B cell (primary cell): ENCODE measurements at regions of chr20 and their contacts with region 1.

Region 1: DNA sequence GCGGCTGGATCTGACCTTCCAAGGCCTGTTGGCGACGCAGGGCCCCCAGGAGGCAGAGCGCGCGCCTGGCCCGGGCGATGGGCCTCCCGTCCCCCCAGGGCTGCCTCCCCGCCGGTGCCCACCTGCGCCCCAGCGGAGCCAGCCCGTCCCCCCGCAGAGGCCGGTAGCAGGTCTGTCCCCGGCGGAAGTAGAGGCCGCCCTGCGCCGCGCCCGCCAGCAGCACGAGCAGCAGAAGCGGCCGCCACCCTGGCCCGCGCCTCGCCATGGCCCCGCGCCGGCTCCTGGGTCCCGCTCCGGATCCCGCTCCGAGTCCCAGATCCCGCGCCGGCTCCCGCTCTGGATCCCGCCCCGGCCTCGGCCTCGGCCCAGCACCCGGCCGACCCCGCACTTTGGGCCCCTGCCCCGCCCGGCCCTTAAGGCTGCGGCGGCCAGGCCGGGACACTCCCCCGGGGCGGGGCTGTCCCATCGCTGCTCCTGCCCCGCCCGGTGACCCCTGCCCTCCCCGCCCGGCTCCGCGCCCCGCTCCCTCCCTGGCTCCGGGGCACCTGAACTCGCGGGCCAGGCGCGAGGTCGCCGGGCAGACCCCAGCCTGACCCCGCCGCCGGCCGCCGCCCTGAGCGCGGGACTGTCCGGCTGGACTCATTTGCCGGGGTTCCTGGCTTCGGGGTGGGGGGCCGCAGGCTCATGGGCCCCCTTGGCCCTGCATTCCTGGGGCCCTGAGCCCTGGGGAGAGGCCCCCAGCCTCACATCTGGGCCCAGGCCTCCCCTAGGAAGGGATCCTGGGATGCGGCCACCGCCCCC is at the start of gene CTSZ:
- DNase-seq: peak; percentile 60
- ATAC-seq: peak; percentile 23
- H3K4me3 ChIP-seq: peak within 1 kb of the TSS; percentile 79 to 91 (median 88)
- H3K4me3 Mint-ChIP-seq: peak within 1 kb of the TSS; percentile 98
- H3K27ac ChIP-seq: peak within 1 kb of the TSS; percentile 97
- H3K27ac Mint-ChIP-seq: peak within 1 kb of the TSS; percentile 99
- H3K4me1 ChIP-seq: peaks cover 45 to 65% of the 10 kb centered on the region in 2 donors
- H3K4me1 Mint-ChIP-seq: peaks cover 71% of the 10 kb centered on the region
- H3K27me3 ChIP-seq: no peaks in the 10 kb centered on the region
- H3K27me3 Mint-ChIP-seq: no peaks in the 10 kb centered on the region
- CTCF ChIP-seq: no peak
- total RNA-seq, gene CTSZ: 319 and 322 TPM in 2 replicates

Region 2: GRCh38 chr20:57391074-57391554 is 1616.0 kb before region 1 on chr20 and contains the start of gene RBM38:
- CTCF ChIA-PET with region 1: no interaction called
- POLR2A ChIA-PET with region 1: no interaction called
- intact Hi-C with region 1: loop called (anchors 10 kb)
- DNase-seq: peak; percentile 91
- ATAC-seq: peak; percentile 66
- H3K4me3 ChIP-seq: peak within 1 kb of the TSS; percentile 82 to 99 (median 91)
- H3K4me3 Mint-ChIP-seq: peak within 1 kb of the TSS; percentile 98
- H3K27ac ChIP-seq: peak within 1 kb of the TSS; percentile 96 to 98
- H3K27ac Mint-ChIP-seq: peak within 1 kb of the TSS; percentile 98
- H3K4me1 ChIP-seq: peaks cover 54 to 66% of the 10 kb centered on the region in 2 donors
- H3K4me1 Mint-ChIP-seq: peaks cover 51% of the 10 kb centered on the region
- H3K27me3 ChIP-seq: no peaks in the 10 kb centered on the region
- H3K27me3 Mint-ChIP-seq: no peaks in the 10 kb centered on the region
- CTCF ChIP-seq: no peak
- total RNA-seq, gene RBM38: 224 and 225 TPM in 2 replicates

Region 3: DNA sequence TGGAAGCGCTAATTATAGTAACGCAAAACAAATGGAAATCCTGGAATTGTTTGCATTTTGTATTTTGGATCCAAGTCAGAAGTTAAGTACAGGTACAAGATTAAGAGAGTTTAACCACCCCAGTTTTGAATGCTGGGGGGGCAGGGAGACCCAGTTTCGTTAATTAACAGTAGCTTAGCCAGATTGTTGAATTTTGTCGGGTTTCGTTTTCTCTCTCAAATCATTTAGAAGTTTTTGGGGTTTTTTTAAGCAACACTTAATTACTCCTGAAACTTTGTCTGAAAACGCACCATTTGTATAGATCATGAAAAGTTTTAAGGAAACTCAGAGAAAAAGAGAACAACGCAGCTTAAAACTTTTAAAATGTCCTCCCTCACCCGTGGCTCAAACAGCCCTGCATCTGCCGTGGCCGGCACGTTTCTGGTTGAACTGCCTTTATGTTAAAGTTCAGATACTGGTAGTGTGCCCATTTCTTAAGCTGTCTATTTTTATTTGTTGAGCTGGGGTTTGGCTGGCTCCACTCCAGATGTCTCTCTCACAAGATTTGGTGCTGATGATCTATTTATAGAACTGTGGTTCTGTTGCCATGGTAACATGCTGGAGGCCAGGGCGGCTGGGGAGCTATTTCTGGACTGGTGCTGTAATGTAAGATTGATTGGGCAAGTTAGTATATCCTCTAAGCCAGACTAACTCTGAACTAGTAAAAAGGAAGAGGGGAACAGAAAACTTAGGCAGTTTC is 99.5 kb before region 1 on chr20:
- CTCF ChIA-PET with region 1: no interaction called
- POLR2A ChIA-PET with region 1: interaction called, 4 read pairs
- intact Hi-C with region 1: loop called (anchors 1 kb)
- DNase-seq: peak; percentile 95
- ATAC-seq: peak; percentile 84
- H3K4me3 ChIP-seq: peak overlapping the region; percentile 24 to 54 (median 33)
- H3K4me3 Mint-ChIP-seq: peak overlapping the region; percentile 85
- H3K27ac ChIP-seq: peak overlapping the region; percentile 94 to 97
- H3K27ac Mint-ChIP-seq: peak overlapping the region; percentile 94
- H3K4me1 ChIP-seq: peaks cover 24 to 37% of the 10 kb centered on the region in 2 donors
- H3K4me1 Mint-ChIP-seq: peaks cover 59% of the 10 kb centered on the region
- H3K27me3 ChIP-seq: no peaks in the 10 kb centered on the region
- H3K27me3 Mint-ChIP-seq: no peaks in the 10 kb centered on the region
- CTCF ChIP-seq: no peak

Region 4: DNA sequence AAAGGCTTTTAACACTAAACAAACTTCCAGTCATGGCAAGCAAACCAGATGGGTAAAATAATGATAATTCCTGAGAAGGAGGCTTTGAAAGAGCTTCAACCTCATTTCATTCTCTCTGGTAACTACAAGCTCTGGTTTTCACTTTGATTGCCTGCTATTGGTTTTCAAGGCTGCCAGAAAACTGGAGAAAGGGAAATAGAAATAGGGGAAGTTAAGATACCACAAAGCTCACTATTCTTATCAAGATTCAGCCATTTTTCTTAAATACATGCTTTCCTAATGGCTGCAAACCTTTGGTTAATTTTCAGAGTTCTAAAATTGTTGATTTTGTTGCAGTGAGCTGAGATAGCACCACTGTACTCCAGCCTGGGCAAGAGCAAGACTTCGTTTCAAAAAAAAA is 68.5 kb before region 1 on chr20:
- CTCF ChIA-PET with region 1: no interaction called
- POLR2A ChIA-PET with region 1: no interaction called
- intact Hi-C with region 1: no loop called
- DNase-seq: peak; percentile 39
- ATAC-seq: no peak
- H3K4me3 ChIP-seq: peak overlapping the region in 1 of 5 experiments; percentile 10
- H3K4me3 Mint-ChIP-seq: no peak overlapping the region
- H3K27ac ChIP-seq: no peak overlapping the region
- H3K27ac Mint-ChIP-seq: no peak overlapping the region
- H3K4me1 ChIP-seq: peaks cover 10 to 12% of the 10 kb centered on the region in 2 donors
- H3K4me1 Mint-ChIP-seq: peaks cover 16% of the 10 kb centered on the region
- H3K27me3 ChIP-seq: no peaks in the 10 kb centered on the region
- H3K27me3 Mint-ChIP-seq: no peaks in the 10 kb centered on the region
- CTCF ChIP-seq: no peak

Region 5: GRCh38 chr20:59032023-59032712 is 25.1 kb after region 1 on chr20 and contains the start of gene ATP5F1E:
- CTCF ChIA-PET with region 1: interaction called, 32 read pairs
- POLR2A ChIA-PET with region 1: interaction called, 30 read pairs
- intact Hi-C with region 1: loop called (anchors 1 kb)
- DNase-seq: peak; percentile 98
- ATAC-seq: peak; percentile 97
- H3K4me3 ChIP-seq: peak within 1 kb of the TSS; percentile 68 to 82 (median 80)
- H3K4me3 Mint-ChIP-seq: peak within 1 kb of the TSS; percentile 97
- H3K27ac ChIP-seq: peak within 1 kb of the TSS; percentile 84 to 91
- H3K27ac Mint-ChIP-seq: peak within 1 kb of the TSS; percentile 98
- H3K4me1 ChIP-seq: peaks cover 27 to 37% of the 10 kb centered on the region in 2 donors
- H3K4me1 Mint-ChIP-seq: peaks cover 45% of the 10 kb centered on the region
- H3K27me3 ChIP-seq: no peaks in the 10 kb centered on the region
- H3K27me3 Mint-ChIP-seq: no peaks in the 10 kb centered on the region
- CTCF ChIP-seq: no peak
- total RNA-seq, gene ATP5F1E: 51.0 and 55.0 TPM in 2 replicates

Region 6: GRCh38 chr20:59120491-59120890 is 113.4 kb after region 1 on chr20:
- CTCF ChIA-PET with region 1: no interaction called
- POLR2A ChIA-PET with region 1: no interaction called
- intact Hi-C with region 1: loop called (anchors 1 kb)
- DNase-seq: peak; percentile 48
- ATAC-seq: no peak
- H3K4me3 ChIP-seq: no peak overlapping the region
- H3K4me3 Mint-ChIP-seq: peak overlapping the region; percentile 91
- H3K27ac ChIP-seq: no peak overlapping the region
- H3K27ac Mint-ChIP-seq: peak overlapping the region; percentile 98
- H3K4me1 ChIP-seq: peaks cover 58 to 60% of the 10 kb centered on the region in 2 donors
- H3K4me1 Mint-ChIP-seq: peaks cover 68% of the 10 kb centered on the region
- H3K27me3 ChIP-seq: no peaks in the 10 kb centered on the region
- H3K27me3 Mint-ChIP-seq: no peaks in the 10 kb centered on the region
- CTCF ChIP-seq: no peak